ENCODE measurements at regions of chr12 and their contacts with region 1.

Region 1: GRCh38 chr12:76094754-76095153 is 10.3 kb upstream of the NAP1L1 start:
- DNase-seq: no peak
- ATAC-seq: no peak

Region 2: DNA sequence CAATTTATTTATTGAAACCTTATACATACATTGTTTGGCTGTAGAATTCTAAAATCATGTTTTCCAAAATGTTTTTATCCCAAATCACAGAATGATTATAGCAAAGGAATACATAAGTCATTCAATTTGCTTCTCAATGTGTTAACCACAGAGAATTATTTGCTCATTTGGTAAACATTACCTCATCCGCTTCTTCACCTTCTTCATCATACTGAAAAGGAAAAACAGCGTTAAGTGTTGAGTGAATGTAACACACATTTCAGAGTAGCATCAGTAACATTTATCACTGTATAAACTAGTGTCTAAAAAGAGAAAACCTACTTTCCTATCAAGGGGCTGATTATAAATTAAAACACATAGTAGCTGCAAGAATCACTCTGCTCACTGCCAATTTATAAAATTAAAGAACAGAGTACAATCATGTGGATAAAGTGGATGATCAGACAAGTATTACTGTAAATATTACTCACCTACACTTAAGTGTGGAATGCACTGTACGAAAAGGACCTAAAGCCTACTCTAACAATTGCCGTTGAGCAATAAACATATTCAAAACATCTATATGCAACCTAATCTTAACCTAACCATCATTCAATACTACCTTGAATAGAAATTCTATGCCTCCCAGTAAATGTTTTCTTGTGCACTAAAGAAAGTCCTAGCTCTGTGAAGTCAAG is 45.0 kb before region 1 on chr12:
- intact Hi-C with region 1: no loop called
- DNase-seq: no peak
- ATAC-seq: no peak

Region 3: GRCh38 chr12:76611533-76611932 is 516.8 kb after region 1 on chr12:
- intact Hi-C with region 1: loop called in 1 of 2 experiments (anchors 10 kb)
- DNase-seq: no peak
- ATAC-seq: no peak

Measured in left colon (tissue), 2 donors.